ENCODE measurements at regions of chr10 and their contacts with region 1.

Region 1: GRCh38 chr10:99430451-99431189 is at the start of gene GOT1:
- DNase-seq: peak; percentile 94 to 97
- H3K4me3 ChIP-seq: peak within 1 kb of the TSS; percentile 74 to 94
- H3K27ac ChIP-seq: peak within 1 kb of the TSS; percentile 70 to 89
- H3K4me1 ChIP-seq: no peaks in the 10 kb centered on the region
- H3K27me3 ChIP-seq: no peaks in the 10 kb centered on the region
- CTCF ChIP-seq: no peak
- POLR2A ChIP-seq: peak; percentile 28 to 83
- total RNA-seq, gene GOT1: 18.4 to 35.0 (median 22.6) TPM

Region 2: DNA sequence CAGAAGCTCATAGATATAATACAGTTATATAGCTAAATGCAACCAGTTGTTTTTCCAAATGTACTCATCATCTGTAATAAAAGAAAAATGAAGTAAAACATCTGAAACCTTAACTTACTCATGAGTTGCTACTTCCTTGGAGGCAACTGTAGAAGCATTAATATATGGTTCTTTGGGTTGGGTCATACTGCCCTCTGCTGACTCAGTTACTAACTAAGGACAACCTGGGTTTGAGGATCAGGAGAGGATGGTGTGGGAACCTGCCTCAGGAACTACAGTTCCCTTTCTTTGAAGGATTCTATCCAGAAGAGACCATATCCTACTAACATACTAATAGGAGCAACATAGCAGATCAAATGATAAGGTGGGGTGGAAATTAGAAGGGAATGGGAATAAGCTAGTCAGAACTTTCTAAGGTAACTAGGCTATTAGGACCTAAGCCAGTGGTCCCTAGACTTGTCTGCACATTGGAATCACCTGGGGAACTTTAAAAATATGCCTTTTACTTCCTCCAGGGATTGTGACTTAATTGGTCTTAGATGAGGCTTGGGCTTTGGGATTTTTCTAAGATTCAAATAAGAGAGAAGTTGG is 280.6 kb after region 1 on chr10:
- intact Hi-C with region 1: loop called (anchors 10 kb)
- DNase-seq: peak in 1 of 2 donors; percentile 45
- H3K4me3 ChIP-seq: no peak overlapping the region
- H3K27ac ChIP-seq: no peak overlapping the region
- H3K4me1 ChIP-seq: peaks cover 0 to 10% of the 10 kb centered on the region in 2 donors
- H3K27me3 ChIP-seq: no peaks in the 10 kb centered on the region
- CTCF ChIP-seq: peak; percentile 36 to 49 (median 48)
- POLR2A ChIP-seq: no peak

Region 3: GRCh38 chr10:99788598-99789256 is 358.1 kb after region 1 on chr10:
- intact Hi-C with region 1: no loop called
- DNase-seq: peak; percentile 73 to 74
- H3K4me3 ChIP-seq: no peak overlapping the region
- H3K27ac ChIP-seq: peak overlapping the region; percentile 62 to 69
- H3K4me1 ChIP-seq: peaks cover 0 to 4% of the 10 kb centered on the region in 2 donors
- H3K27me3 ChIP-seq: no peaks in the 10 kb centered on the region
- CTCF ChIP-seq: no peak
- POLR2A ChIP-seq: no peak